ENCODE measurements at regions of chr18 and their contacts with region 1.

Region 1: GRCh38 chr18:11027862-11028261 is 121.5 kb downstream of the PIEZO2 start:
- DNase-seq: no peak
- H3K4me3 ChIP-seq: no peak overlapping the region
- H3K27ac ChIP-seq: no peak overlapping the region
- H3K4me1 ChIP-seq: no peaks in the 10 kb centered on the region
- H3K27me3 ChIP-seq: no peaks in the 10 kb centered on the region
- CTCF ChIP-seq: no peak
- EP300 ChIP-seq: no peak
- POLR2A ChIP-seq: no peak
- RAD21 ChIP-seq: no peak

Region 2: GRCh38 chr18:11040823-11041656 is 13.2 kb after region 1 on chr18:
- CTCF ChIA-PET with region 1: interaction called, 12 read pairs
- POLR2A ChIA-PET with region 1: no interaction called
- DNase-seq: peak in 1 of 2 experiments; percentile 58
- H3K4me3 ChIP-seq: no peak overlapping the region
- H3K27ac ChIP-seq: no peak overlapping the region
- H3K4me1 ChIP-seq: peaks cover 0 to 4% (median 0%) of the 10 kb centered on the region in 4 experiments; a peak in 1 of 7 replicates
- H3K27me3 ChIP-seq: no peaks in the 10 kb centered on the region
- CTCF ChIP-seq: peak; percentile 42 to 76 (median 73)
- EP300 ChIP-seq: no peak
- POLR2A ChIP-seq: no peak
- RAD21 ChIP-seq: peak; percentile 80 to 87

Region 3: GRCh38 chr18:11339188-11339775 is 311.4 kb after region 1 on chr18:
- CTCF ChIA-PET with region 1: no interaction called
- POLR2A ChIA-PET with region 1: no interaction called
- DNase-seq: no peak
- H3K4me3 ChIP-seq: no peak overlapping the region
- H3K27ac ChIP-seq: no peak overlapping the region
- H3K4me1 ChIP-seq: no peaks in the 10 kb centered on the region; a peak in 1 of 7 replicates
- H3K27me3 ChIP-seq: no peaks in the 10 kb centered on the region
- CTCF ChIP-seq: no peak
- EP300 ChIP-seq: no peak
- POLR2A ChIP-seq: no peak
- RAD21 ChIP-seq: no peak